ENCODE measurements at regions of chr6 and their contacts with region 1.

Region 1: DNA sequence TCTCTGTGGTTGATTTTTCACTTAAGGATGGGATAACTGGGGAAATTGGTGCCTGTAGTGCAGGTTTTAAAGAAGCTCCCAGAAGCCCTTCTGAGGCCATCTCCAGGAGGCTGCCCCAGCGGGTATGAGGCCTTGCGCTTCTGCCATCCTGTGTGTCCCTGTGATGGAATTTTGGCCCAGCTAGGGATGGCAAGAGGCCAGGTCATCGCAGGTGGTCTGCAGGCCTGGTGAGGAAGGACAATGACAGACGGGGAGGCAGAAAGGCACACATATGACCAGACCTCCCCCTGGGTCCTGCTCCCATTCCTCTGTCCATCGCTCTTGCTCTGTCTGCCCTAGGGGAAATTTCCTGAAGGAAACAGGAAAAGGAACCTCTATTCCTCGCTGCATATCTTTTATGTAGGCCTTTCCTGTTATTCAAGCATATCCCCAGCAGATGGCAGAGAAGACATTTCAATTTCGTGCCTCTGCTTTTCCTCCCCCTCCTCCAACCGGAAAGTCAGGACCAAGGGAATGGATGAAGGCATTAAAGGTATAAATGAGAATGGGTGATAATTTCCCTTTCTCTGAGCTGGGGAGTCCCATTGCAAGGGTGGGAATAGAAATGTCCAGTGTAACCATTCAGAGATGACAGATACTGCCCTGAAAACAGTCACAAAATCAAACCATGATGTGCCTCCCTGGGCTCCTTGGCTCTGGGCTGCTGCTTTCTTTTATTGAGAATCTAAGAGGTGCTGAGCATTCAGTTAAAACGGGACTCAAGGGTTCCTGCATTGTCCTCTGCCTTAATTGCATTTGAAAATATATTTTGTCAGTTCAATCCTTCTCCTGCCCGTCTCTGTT is 17.6 kb upstream of the HLA-F start:
- DNase-seq: peak in 3 of 4 experiments; percentile 30 to 56 (median 54)
- ATAC-seq: peak; percentile 61; the same call in 2 of the 3 replicates
- H3K4me3 ChIP-seq: no peak overlapping the region
- H3K27ac ChIP-seq: no peak overlapping the region
- H3K4me1 ChIP-seq: no peaks in the 10 kb centered on the region
- H3K27me3 ChIP-seq: peaks cover 6 to 34% of the 10 kb centered on the region in 2 experiments; a peak in 3 of 5 replicates
- CTCF ChIP-seq: peak; percentile 70 to 74 (median 71)
- EP300 ChIP-seq: no peak
- POLR2A ChIP-seq: no peak
- RAD21 ChIP-seq: peak; percentile 93

Region 2: DNA sequence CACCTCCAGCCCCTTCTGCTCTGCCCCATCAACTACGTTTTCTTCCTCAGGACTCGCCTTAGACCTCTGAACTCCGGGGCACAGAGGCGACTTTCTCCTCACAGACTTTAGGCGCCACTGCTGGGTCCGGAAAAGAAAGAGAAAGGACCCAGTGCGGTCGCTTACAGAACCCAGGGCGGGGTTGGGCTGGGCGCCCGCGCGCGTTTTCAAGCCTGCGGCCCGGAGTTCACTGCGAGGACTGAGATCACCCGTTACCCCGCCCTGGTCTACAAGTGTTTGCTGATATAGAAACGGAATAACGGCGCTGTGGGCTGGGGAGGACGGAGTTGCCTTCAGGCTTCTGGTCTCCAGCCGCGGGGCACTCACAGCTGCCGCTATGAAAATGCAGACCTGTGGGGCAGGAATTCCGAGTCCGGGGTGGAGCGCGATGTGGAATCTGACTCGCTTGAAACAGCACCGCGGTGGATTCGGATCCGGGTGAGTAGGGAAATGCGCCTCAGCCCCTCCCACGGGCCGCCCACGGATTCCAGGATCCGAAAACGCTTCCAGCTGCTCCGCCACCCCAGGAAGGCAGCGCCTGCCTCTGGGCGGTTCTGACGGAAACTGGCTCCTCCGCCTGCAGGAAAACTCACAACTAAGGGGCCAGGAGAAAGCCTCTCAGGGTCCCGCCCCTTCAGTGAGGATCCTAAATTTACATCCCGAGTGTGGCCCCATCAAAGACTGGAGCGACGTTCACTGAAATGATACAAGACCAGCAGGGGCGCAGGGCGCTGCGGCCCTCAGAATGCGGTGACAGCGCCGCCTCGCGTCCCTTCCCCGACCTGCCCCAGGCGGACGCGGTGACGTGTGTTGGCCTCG is 47.1 kb after region 1 on chr6:
- CTCF ChIA-PET with region 1: interaction called, 7 read pairs
- POLR2A ChIA-PET with region 1: interaction called, 3 read pairs
- in situ Hi-C with region 1: no loop called
- intact Hi-C with region 1: loop called (anchors 1 kb)
- DNase-seq: peak; percentile 83 to 95 (median 88)
- ATAC-seq: peak; percentile 91
- H3K4me3 ChIP-seq: peak overlapping the region; percentile 51
- H3K27ac ChIP-seq: peak overlapping the region; percentile 68
- H3K4me1 ChIP-seq: peaks cover 14 to 30% of the 10 kb centered on the region in 2 experiments
- H3K27me3 ChIP-seq: peaks cover 0 to 4% of the 10 kb centered on the region in 2 experiments; a peak in 2 of 5 replicates
- CTCF ChIP-seq: peak; percentile 99 to 100 (median 100)
- EP300 ChIP-seq: no peak
- POLR2A ChIP-seq: peak; percentile 52; the same call in 1 of the 2 replicates
- RAD21 ChIP-seq: peak; percentile 75 to 90

Region 3: DNA sequence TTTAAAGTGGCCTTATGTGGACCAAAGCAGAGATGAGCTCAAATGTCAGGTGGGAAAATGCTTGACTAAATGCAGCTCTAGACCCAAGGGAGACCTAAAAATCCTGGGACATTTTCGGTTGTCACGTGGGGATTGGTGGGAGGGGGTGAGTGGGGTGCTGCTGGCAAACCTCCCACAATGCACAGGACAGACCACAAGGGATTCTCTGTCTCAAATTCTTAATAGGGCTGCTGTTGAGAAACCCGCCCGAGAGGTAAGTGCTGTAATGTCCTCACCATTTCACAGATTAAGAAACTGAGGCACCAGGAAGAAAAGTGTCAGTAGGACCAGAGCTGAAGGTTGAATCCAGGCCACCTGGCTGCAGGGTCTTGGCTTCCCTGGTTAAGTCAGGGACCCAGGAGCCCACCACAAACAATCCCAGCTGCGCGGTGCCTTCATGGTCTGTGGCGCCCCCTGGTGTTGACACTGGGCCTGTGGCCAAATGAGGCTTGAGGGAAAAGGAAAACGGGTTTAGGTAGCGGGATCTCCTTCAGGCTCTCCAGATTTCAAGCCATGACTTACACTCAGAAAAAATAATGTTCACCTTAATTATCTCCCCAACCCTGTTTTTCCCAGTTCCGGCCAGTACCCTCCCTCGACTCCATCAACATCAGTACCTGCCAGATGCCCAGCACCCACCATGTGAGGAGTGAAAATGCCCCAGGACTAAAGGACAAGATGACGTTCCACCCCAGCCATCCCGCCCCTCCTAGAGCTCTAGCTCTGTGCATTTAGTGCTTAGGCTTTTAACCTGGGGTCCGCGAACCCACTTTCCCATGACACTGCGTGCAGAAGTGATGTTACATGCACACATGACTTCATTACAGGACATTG is 129.2 kb after region 1 on chr6:
- CTCF ChIA-PET with region 1: interaction called, 38 read pairs
- POLR2A ChIA-PET with region 1: no interaction called
- in situ Hi-C with region 1: no loop called
- intact Hi-C with region 1: loop called (anchors 1 kb)
- DNase-seq: peak; percentile 30 to 44 (median 42)
- ATAC-seq: peak; percentile 88
- H3K4me3 ChIP-seq: no peak overlapping the region
- H3K27ac ChIP-seq: no peak overlapping the region
- H3K4me1 ChIP-seq: no peaks in the 10 kb centered on the region
- H3K27me3 ChIP-seq: peaks cover 0 to 12% of the 10 kb centered on the region in 2 experiments; a peak in 4 of 5 replicates
- CTCF ChIP-seq: peak; percentile 73 to 83 (median 75)
- EP300 ChIP-seq: no peak
- POLR2A ChIP-seq: no peak
- RAD21 ChIP-seq: peak; percentile 48 to 51

Region 4: GRCh38 chr6:30013291-30013922 is 307.8 kb after region 1 on chr6:
- CTCF ChIA-PET with region 1: interaction called, 3 read pairs
- POLR2A ChIA-PET with region 1: interaction called, 3 read pairs
- in situ Hi-C with region 1: no loop called
- intact Hi-C with region 1: loop called (anchors 5 kb)
- DNase-seq: peak; percentile 32 to 64 (median 52)
- ATAC-seq: peak; percentile 89
- H3K4me3 ChIP-seq: no peak overlapping the region
- H3K27ac ChIP-seq: no peak overlapping the region
- H3K4me1 ChIP-seq: no peaks in the 10 kb centered on the region
- H3K27me3 ChIP-seq: no peaks in the 10 kb centered on the region
- CTCF ChIP-seq: peak; percentile 78 to 89 (median 83)
- EP300 ChIP-seq: no peak
- POLR2A ChIP-seq: no peak
- RAD21 ChIP-seq: peak; percentile 46 to 54

Measured in K562 (cell line).